Right lobe of liver (tissue), 6 donors: ENCODE measurements at regions of chr17 and their contacts with region 1.

Region 1: GRCh38 chr17:43680461-43680860 is 18.7 kb upstream of the MEOX1 start:
- DNase-seq: no peak
- ATAC-seq: no peak
- H3K4me3 ChIP-seq: no peak overlapping the region
- H3K27ac ChIP-seq: no peak overlapping the region
- H3K4me1 ChIP-seq: no peaks in the 10 kb centered on the region
- H3K27me3 ChIP-seq: no peaks in the 10 kb centered on the region
- CTCF ChIP-seq: no peak
- POLR2A ChIP-seq: no peak

Region 2: DNA sequence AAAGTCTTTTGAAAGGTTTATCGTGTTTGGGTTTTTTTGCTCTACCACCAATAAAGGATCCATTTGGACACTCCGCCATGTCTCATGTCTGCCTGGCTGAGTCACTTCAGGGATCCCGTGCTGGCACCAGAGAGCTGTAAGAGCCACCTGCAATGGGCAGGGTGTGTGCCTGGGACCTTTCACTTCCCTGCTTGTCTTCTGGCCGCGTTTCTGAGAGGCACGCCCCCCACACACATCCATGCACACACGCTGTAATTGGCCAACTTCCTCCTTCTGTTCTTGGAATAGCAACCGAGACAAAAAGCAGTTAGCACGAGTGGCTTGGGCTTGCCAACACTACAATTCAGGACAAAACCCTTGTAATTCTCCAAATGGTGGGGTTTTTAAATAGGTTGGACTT is 87.9 kb after region 1 on chr17:
- intact Hi-C with region 1: no loop called
- DNase-seq: peak in 1 of 3 donors; percentile 58
- ATAC-seq: peak in 1 of 4 donors; percentile 7
- H3K4me3 ChIP-seq: no peak overlapping the region
- H3K27ac ChIP-seq: no peak overlapping the region
- H3K4me1 ChIP-seq: peaks cover 0 to 32% (median 9%) of the 10 kb centered on the region in 4 donors
- H3K27me3 ChIP-seq: no peaks in the 10 kb centered on the region
- CTCF ChIP-seq: no peak
- POLR2A ChIP-seq: no peak

Region 3: DNA sequence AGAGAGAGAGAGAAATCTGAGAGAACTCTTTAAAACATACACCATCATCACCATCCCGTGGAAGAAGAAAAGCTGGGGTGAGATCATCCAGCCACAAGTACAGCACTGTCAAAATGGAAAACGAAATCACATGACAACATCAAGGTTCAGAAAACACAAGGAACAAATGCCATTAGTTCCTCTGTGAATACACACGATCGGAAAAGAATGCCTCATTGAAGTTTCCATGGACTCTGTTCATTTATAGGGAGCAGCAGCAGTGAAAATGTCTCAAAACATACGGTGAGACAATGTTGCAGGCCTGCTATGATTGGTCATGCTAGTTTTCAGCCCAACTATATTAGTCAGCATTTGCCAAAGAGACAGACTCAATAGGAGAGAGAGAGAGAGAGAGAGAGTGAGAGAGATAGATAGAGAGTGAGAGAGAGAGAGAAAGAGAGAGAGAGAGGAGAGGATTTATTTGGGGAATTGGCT is 104.2 kb after region 1 on chr17:
- intact Hi-C with region 1: no loop called
- DNase-seq: no peak
- ATAC-seq: no peak
- H3K4me3 ChIP-seq: no peak overlapping the region
- H3K27ac ChIP-seq: no peak overlapping the region
- H3K4me1 ChIP-seq: peaks cover 0 to 10% (median 0%) of the 10 kb centered on the region in 4 donors
- H3K27me3 ChIP-seq: no peaks in the 10 kb centered on the region
- CTCF ChIP-seq: no peak
- POLR2A ChIP-seq: no peak

Region 4: DNA sequence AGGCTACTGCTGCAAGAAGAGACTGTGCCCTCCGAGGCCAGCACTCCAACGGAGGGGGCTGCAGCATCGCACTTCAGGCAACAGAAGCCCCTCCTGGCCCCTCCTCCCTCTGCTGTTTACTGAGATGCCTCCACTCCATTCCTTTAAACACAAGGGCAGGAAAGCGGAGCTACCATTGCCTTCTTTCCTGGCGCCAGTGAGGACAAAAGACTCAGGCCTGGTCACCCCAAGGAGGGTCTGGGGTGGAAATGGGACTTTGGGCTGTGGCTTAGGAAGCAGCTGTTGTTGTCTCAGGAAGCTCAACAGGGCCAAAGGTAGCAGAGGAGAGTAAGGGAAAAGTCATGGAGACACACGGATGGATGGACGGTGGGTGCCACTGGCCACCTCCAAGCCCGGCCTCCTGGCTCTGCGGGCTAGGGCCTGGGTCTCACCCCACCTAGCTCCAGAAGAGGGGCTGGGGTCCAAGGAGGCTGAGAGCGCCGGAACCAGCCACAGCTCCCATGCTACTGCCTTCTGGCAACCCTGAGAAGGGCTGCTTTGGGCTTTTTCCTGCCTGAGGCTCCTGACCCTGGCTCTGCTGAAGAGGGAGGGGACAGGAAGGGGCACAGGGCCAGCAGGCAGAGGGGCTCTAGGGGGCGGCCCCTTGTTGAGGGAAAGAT is 177.6 kb after region 1 on chr17:
- intact Hi-C with region 1: loop called in 1 of 2 experiments (anchors 10 kb)
- DNase-seq: peak in 1 of 3 donors; percentile 35
- ATAC-seq: peak in 2 of 4 donors; percentile 37 to 42
- H3K4me3 ChIP-seq: no peak overlapping the region
- H3K27ac ChIP-seq: no peak overlapping the region
- H3K4me1 ChIP-seq: no peaks in the 10 kb centered on the region
- H3K27me3 ChIP-seq: no peaks in the 10 kb centered on the region
- CTCF ChIP-seq: no peak
- POLR2A ChIP-seq: no peak